T-cell (primary cell): ENCODE measurements at regions of chr7 and their contacts with region 1.

Region 1: GRCh38 chr7:27605689-27606269 is 56.9 kb downstream of the HIBADH start:
- DNase-seq: peak in 1 of 35 experiments; percentile 2
- ATAC-seq: no peak
- H3K4me3 ChIP-seq: no peak overlapping the region
- H3K4me3 Mint-ChIP-seq: no peak overlapping the region
- H3K27ac ChIP-seq: no peak overlapping the region
- H3K27ac Mint-ChIP-seq: no peak overlapping the region
- H3K4me1 ChIP-seq: no peaks in the 10 kb centered on the region
- H3K4me1 Mint-ChIP-seq: no peaks in the 10 kb centered on the region
- H3K27me3 ChIP-seq: no peaks in the 10 kb centered on the region
- H3K27me3 Mint-ChIP-seq: no peaks in the 10 kb centered on the region

Region 2: DNA sequence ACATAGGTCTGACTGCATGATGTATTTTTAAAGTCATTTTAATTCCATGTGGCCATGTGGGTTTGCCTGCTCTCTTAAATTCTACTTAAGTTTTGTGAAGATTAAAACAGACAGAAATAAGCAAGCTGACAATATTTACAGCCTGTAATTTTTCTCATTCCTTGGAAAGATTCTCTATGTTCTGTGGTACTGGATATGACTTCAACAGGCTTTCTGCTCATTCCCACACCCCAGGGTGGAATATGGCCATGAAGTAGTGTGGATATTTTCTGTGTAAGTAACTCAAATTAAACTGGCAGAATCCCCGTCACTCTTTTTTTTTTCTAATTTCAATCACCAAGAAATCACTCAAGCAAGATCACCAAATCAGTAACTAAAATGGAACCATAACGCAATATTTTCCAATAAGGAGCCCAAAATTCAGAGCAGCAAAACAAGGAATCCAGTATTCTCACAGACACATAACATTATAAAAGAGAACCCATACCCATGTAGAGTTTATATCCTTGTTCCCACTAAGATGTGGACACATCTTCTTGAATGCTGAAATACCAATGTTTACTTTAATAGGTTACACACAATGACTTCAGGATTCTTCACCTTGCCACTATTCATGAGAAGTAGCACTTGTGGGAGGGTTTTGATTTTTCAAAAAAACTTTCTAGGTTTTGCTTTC is 468.0 kb before region 1 on chr7:
- CTCF ChIA-PET with region 1: interaction called in 1 of 2 experiments, 10 read pairs
- POLR2A ChIA-PET with region 1: no interaction called
- DNase-seq: no peak
- ATAC-seq: no peak
- H3K4me3 ChIP-seq: no peak overlapping the region
- H3K4me3 Mint-ChIP-seq: no peak overlapping the region
- H3K27ac ChIP-seq: no peak overlapping the region
- H3K27ac Mint-ChIP-seq: no peak overlapping the region
- H3K4me1 ChIP-seq: peaks cover 0 to 18% of the 10 kb centered on the region in 2 experiments
- H3K4me1 Mint-ChIP-seq: peaks cover 0 to 15% (median 4%) of the 10 kb centered on the region in 3 donors
- H3K27me3 ChIP-seq: peaks cover 0 to 36% of the 10 kb centered on the region in 2 experiments
- H3K27me3 Mint-ChIP-seq: peaks cover 40 to 72% of the 10 kb centered on the region in 2 donors

Region 3: DNA sequence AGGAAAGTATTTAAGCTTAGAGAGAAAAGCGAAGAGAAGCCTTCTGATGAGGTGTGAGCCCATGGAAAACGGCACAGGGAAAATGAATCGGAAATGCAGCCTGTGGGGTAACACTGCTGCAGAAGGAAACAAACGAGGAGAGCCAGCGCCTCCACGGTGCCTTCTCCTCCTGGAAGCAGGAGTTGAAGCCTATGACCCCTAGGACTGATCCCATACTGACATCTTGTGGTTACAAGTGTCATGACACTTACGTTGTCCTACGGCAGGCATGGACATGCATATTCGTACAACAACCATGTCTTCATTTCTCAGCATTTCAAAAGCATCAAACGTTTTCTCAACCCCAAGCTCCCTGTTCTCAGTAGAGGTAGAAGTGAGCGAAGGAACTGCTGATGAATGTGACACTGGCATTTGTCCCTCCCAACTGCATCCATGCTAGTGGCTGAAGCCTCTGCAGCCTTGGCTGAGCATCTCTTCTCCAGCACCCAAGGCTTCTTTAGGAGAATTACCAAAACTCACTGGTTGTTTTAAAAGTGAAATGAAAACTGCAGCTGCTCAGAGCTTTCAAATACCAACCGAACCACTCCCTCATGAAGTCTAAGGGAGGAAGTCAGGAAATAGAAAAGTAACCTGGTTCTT is 414.6 kb after region 1 on chr7:
- CTCF ChIA-PET with region 1: interaction called in 1 of 2 experiments, 12 read pairs
- POLR2A ChIA-PET with region 1: no interaction called
- DNase-seq: peak in 27 of 35 experiments; percentile 1 to 73 (median 12)
- ATAC-seq: peak; percentile 66 to 73 (median 71)
- H3K4me3 ChIP-seq: no peak overlapping the region
- H3K4me3 Mint-ChIP-seq: no peak overlapping the region
- H3K27ac ChIP-seq: no peak overlapping the region
- H3K27ac Mint-ChIP-seq: no peak overlapping the region
- H3K4me1 ChIP-seq: peaks cover 0 to 5% of the 10 kb centered on the region in 2 experiments
- H3K4me1 Mint-ChIP-seq: peaks cover 8 to 17% (median 13%) of the 10 kb centered on the region in 3 donors
- H3K27me3 ChIP-seq: no peaks in the 10 kb centered on the region
- H3K27me3 Mint-ChIP-seq: no peaks in the 10 kb centered on the region